ENCODE measurements at regions of chr14 and their contacts with region 1.

Region 1: GRCh38 chr14:93137864-93138263 is 22.1 kb upstream of the ITPK1 start:
- DNase-seq: peak; percentile 24
- H3K4me3 ChIP-seq: no peak overlapping the region
- H3K27ac ChIP-seq: no peak overlapping the region
- H3K4me1 ChIP-seq: no peaks in the 10 kb centered on the region
- CTCF ChIP-seq: no peak; the same call in 1 of the 2 replicates

Region 2: DNA sequence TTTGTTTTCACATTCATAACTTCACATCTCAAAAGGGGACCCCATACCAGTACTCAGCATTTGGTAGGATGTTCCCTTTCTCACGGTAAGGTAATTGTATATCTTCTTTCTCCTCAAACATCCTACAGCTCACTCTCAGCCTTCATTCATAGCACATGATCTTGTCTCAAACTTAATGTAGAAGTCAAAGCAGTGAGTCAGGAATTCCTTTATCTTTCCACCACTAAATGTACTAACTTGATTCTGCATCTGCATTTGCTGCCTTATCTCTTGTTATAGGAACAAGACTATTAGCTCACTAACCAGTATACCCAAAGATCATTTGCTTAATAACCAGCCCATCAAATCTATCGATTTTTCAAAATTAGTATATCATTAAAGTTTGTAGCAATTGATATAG is 993.2 kb before region 1 on chr14:
- CTCF ChIA-PET with region 1: no interaction called
- POLR2A ChIA-PET with region 1: no interaction called
- intact Hi-C with region 1: no loop called
- DNase-seq: no peak
- H3K4me3 ChIP-seq: no peak overlapping the region
- H3K27ac ChIP-seq: no peak overlapping the region
- H3K4me1 ChIP-seq: no peaks in the 10 kb centered on the region
- CTCF ChIP-seq: no peak

Region 3: GRCh38 chr14:92880869-92881289 is 257.0 kb before region 1 on chr14:
- CTCF ChIA-PET with region 1: no interaction called
- POLR2A ChIA-PET with region 1: no interaction called
- intact Hi-C with region 1: loop called (anchors 1 kb)
- DNase-seq: no peak
- H3K4me3 ChIP-seq: no peak overlapping the region
- H3K27ac ChIP-seq: no peak overlapping the region
- H3K4me1 ChIP-seq: no peaks in the 10 kb centered on the region
- CTCF ChIP-seq: peak; percentile 55

Region 4: DNA sequence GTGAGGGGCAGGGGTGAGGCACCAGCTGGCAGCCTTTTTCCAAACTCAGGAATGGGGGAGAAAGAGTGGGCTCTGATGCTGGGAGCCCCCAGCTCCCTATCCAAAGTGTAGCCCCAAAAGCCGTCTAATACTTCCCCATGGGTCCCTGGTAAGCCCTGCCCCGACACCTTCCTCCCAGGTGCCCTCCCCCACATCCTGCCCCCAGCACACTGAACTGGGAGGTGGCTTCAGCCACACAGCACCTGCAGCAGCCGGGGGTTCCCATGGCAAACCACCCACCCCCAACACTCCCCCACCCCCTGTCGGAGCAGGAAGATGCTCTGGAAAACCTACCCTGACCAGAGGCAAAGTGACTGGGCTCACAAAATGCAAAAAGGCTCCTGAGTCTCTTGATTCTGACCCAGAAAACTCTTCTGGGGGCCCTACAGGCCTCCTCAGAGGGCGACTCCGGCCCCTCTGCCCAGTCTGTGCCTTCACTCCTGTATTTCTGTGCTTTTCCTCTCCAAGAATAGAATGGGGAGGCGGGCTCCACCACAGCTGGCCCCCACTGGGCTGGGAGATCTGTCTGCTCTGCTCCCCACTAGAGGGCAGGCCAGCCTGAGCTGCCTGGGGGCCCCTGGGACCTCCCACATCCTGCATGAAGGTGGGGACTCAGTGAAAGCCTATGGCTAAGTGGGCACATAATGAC is 103.7 kb before region 1 on chr14:
- CTCF ChIA-PET with region 1: no interaction called
- POLR2A ChIA-PET with region 1: no interaction called
- intact Hi-C with region 1: loop called (anchors 1 kb)
- DNase-seq: peak; percentile 63
- H3K4me3 ChIP-seq: no peak overlapping the region
- H3K27ac ChIP-seq: no peak overlapping the region
- H3K4me1 ChIP-seq: peaks cover 18% of the 10 kb centered on the region
- CTCF ChIP-seq: peak; percentile 86

Region 5: GRCh38 chr14:93100570-93100969 is 37.3 kb before region 1 on chr14:
- CTCF ChIA-PET with region 1: no interaction called
- POLR2A ChIA-PET with region 1: no interaction called
- intact Hi-C with region 1: no loop called
- DNase-seq: no peak
- H3K4me3 ChIP-seq: no peak overlapping the region
- H3K27ac ChIP-seq: no peak overlapping the region
- H3K4me1 ChIP-seq: peaks cover 13% of the 10 kb centered on the region
- CTCF ChIP-seq: no peak

Measured in OCI-LY7 (cell line).